ENCODE measurements at regions of chr19 and their contacts with region 1.

Region 1: GRCh38 chr19:38033658-38034498 is 126.9 kb downstream of the SIPA1L3 start:
- DNase-seq: peak; percentile 93
- ATAC-seq: peak; percentile 79
- H3K4me3 ChIP-seq: peak overlapping the region in 3 of 5 experiments; percentile 16 to 43 (median 36)
- H3K4me3 Mint-ChIP-seq: peak overlapping the region; percentile 86
- H3K27ac ChIP-seq: peak overlapping the region; percentile 84 to 93
- H3K27ac Mint-ChIP-seq: peak overlapping the region; percentile 99
- H3K4me1 ChIP-seq: peaks cover 63 to 87% of the 10 kb centered on the region in 2 donors
- H3K4me1 Mint-ChIP-seq: peaks cover 81% of the 10 kb centered on the region
- H3K27me3 ChIP-seq: no peaks in the 10 kb centered on the region
- H3K27me3 Mint-ChIP-seq: no peaks in the 10 kb centered on the region
- CTCF ChIP-seq: peak; percentile 65

Region 2: DNA sequence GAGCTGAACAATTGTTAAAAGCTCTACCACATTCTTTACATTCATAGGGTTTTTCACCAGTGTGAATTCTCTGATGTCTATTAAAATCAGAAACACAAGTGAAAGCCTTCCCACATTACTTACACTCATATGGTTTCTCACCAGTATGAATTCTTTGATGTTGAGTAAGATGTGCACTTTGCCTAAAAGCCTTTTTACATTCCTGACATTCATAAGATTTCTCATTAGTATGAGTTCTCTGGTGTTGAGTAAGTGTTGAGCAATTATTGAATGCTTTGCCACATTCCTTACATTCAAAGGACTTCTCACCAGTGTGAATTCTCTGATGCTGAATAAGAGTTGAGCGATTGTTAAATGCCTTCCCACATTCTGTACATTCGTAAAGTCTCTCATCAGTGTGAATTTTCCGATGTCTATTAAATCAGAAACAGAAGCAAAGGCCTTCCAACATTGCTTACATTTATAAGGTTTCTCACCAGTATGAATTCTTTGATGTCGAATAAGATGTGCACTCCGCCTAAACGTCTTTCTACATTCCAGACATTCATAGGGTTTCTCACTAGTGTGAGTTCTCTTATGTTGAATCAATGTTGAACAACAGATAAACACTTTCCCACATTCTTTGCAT is 364.4 kb before region 1 on chr19:
- CTCF ChIA-PET with region 1: no interaction called
- POLR2A ChIA-PET with region 1: no interaction called
- intact Hi-C with region 1: no loop called
- DNase-seq: no peak
- ATAC-seq: no peak
- H3K4me3 ChIP-seq: no peak overlapping the region
- H3K4me3 Mint-ChIP-seq: no peak overlapping the region
- H3K27ac ChIP-seq: no peak overlapping the region
- H3K27ac Mint-ChIP-seq: no peak overlapping the region
- H3K4me1 ChIP-seq: no peaks in the 10 kb centered on the region
- H3K4me1 Mint-ChIP-seq: no peaks in the 10 kb centered on the region
- H3K27me3 ChIP-seq: no peaks in the 10 kb centered on the region
- H3K27me3 Mint-ChIP-seq: no peaks in the 10 kb centered on the region
- CTCF ChIP-seq: no peak

Region 3: DNA sequence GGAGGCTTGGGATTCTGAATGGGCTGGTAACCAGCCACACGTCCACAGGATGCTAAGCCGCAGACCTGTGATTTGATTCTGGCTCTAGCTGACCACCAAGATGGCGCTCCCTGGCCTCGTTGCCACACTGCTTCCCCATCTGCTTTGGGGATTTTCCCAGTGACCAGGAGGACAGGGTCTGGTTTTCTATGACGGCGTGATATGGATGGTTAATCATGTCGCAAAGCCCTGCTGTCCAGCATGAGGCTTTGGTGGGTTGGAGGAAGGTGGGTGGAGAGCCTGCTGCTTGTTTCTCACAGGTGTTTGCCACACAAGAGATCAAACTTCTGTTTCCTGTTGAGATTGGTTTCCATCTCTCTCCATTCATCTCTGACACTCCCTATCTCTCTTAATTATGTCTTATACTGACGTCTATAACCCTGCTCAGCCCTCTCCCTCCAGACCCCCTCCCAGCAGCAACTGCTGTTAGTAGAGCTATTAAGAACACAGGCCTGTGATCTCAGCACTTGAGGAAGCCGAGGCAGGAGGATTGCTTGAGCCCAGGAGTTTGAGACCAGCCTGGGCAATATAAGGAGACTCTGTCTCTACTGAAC is 24.1 kb before region 1 on chr19:
- CTCF ChIA-PET with region 1: interaction called, 12 read pairs
- POLR2A ChIA-PET with region 1: interaction called, 14 read pairs
- intact Hi-C with region 1: loop called (anchors 1 kb)
- DNase-seq: peak; percentile 75
- ATAC-seq: peak; percentile 34
- H3K4me3 ChIP-seq: peak overlapping the region in 1 of 5 experiments; percentile 10
- H3K4me3 Mint-ChIP-seq: peak overlapping the region; percentile 67
- H3K27ac ChIP-seq: peak overlapping the region; percentile 61 to 91
- H3K27ac Mint-ChIP-seq: peak overlapping the region; percentile 90
- H3K4me1 ChIP-seq: peaks cover 73 to 80% of the 10 kb centered on the region in 2 donors
- H3K4me1 Mint-ChIP-seq: peaks cover 61% of the 10 kb centered on the region
- H3K27me3 ChIP-seq: no peaks in the 10 kb centered on the region
- H3K27me3 Mint-ChIP-seq: no peaks in the 10 kb centered on the region
- CTCF ChIP-seq: no peak

Region 4: DNA sequence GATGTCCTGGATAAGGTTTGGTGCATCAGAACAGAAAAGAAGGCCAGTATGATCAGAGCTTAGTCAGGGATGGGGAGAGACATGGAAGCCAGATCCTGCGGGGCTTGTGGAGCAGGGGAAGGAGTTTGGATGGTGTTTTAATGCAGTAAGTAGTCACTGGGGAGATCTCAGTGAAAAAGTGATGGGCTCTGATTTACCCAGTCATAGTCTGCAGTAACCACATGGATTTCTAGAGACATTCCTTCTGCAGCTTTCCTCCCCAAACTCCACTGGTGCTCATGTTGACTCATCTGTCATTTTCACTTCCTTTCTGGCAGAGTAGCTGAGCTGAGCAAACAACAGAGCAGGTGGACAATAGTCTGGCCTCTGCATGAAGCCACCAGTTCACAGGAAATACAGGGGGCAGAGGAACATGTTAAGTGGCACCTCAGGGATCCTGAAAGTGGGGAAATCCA is 46.1 kb after region 1 on chr19:
- CTCF ChIA-PET with region 1: interaction called, 7 read pairs
- POLR2A ChIA-PET with region 1: interaction called, 12 read pairs
- intact Hi-C with region 1: no loop called
- DNase-seq: peak; percentile 48
- ATAC-seq: peak; percentile 83
- H3K4me3 ChIP-seq: no peak overlapping the region
- H3K4me3 Mint-ChIP-seq: peak overlapping the region; percentile 33
- H3K27ac ChIP-seq: peak overlapping the region; percentile 41 to 64
- H3K27ac Mint-ChIP-seq: peak overlapping the region; percentile 88
- H3K4me1 ChIP-seq: peaks cover 18 to 23% of the 10 kb centered on the region in 2 donors
- H3K4me1 Mint-ChIP-seq: peaks cover 22% of the 10 kb centered on the region
- H3K27me3 ChIP-seq: no peaks in the 10 kb centered on the region
- H3K27me3 Mint-ChIP-seq: no peaks in the 10 kb centered on the region
- CTCF ChIP-seq: no peak

Measured in B cell (primary cell).